ENCODE measurements at regions of chr5 and their contacts with region 1.

Region 1: DNA sequence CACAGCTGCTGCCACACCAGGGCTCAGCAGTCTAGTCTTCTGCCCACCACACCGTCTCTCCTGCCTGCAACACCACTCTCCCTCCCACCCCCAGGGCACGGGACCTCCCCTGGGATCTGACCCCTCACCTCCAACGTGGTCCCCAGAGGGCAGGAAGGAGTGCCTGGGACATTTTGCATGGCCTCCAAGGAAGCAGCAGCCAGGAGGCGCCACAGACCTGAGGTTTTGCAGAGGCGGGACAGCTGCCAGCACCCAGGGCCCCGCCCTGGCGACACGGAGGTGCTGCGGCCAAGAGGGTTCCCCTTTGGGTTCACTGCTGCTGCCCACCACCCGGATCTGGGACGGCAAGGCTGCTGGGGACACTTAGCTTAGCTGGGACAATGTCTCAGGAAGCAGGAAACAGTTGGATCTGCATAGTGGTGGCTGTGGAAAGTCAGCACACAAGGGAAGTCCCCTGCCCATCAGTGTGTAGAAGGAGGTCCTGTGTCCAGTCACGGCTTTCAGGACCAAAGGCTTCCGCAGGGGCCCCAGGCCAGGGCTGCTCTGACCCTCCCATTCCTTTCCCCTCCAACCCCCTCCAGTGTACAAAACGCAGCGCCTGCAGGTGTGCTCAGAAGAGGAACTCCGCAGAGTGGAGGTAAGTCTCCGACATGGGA is 13.8 kb downstream of the PROP1 start:
- DNase-seq: peak; percentile 65
- H3K4me3 ChIP-seq: no peak overlapping the region
- H3K27ac ChIP-seq: no peak overlapping the region
- H3K4me1 ChIP-seq: peaks cover 8% of the 10 kb centered on the region
- CTCF ChIP-seq: peak; percentile 77

Region 2: GRCh38 chr5:178063277-178063676 is 81.1 kb after region 1 on chr5:
- CTCF ChIA-PET with region 1: no interaction called
- POLR2A ChIA-PET with region 1: no interaction called
- intact Hi-C with region 1: loop called (anchors 2 kb)
- DNase-seq: no peak
- H3K4me3 ChIP-seq: no peak overlapping the region
- H3K27ac ChIP-seq: no peak overlapping the region
- H3K4me1 ChIP-seq: peaks cover 43% of the 10 kb centered on the region
- CTCF ChIP-seq: no peak

Region 3: DNA sequence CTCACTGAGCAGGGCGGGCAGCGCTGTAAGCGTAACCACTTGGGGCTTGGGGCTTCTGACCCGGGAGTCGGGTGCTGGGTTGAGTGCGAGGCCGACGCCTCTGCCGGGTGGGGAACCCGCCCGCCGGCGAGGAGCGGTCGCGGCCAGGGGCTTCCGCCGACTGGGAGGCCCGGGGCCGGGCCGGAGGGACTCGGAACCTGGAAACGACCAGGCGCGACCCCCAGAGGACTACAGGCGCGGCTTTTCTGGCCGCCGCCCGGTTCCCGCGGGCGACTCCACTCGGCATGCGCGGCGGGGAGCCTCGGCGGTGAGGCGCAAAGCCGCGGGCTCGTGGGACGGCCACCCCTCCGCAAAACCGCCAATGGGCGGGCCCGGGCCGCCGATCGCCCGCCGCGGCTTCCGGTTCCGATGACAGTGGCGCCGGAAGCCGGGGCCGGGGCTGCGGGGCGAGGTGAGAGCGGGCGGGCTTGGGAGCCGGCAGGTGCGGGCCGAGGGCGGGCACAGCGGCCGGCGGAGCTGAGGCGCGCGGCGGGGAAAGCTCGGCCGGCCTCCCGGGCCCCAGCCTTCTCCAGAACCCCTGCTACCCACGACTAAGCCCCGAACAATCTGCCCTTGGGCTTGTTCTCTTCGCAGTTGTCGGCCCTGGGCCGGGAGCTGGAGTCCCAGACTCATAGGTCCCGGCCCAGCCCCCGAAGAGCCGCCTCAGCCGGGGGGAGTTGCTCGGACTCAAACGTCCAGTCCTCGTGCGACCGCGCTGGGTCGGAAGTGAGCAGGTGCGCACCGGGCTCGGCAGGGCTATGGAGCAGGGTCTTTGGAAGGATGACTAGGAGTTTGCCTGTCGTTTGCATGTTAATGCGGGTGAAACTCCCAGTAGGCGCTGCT is 148.6 kb after region 1 on chr5 and contains the start of gene RMND5B:
- CTCF ChIA-PET with region 1: no interaction called
- POLR2A ChIA-PET with region 1: no interaction called
- intact Hi-C with region 1: no loop called
- DNase-seq: peak; percentile 92
- H3K4me3 ChIP-seq: peak within 1 kb of the TSS; percentile 97
- H3K27ac ChIP-seq: peak within 1 kb of the TSS; percentile 82
- H3K4me1 ChIP-seq: peaks cover 19% of the 10 kb centered on the region
- CTCF ChIP-seq: no peak
- total RNA-seq, gene RMND5B: 54.2 and 68.3 TPM in 2 replicates

Region 4: DNA sequence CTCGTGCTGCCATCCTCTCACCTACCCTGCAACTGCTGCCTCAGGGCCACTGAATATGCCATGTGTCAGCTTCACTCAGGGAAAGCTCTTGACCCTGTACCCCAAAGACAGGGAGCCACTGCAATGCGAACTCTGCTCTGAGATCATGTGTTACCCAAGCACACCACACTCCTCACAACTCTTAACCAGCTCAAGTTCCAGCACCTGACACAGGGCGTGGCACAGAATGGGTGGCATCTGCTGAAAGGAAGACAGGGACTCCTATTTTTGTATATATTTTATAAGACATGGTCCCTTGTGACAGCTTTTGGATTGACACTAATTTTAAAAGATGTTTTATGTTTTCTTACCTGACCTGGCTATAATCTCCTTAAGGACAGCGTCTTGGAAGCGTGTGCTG is 239.7 kb after region 1 on chr5:
- CTCF ChIA-PET with region 1: interaction called, 11 read pairs
- POLR2A ChIA-PET with region 1: no interaction called
- intact Hi-C with region 1: no loop called
- DNase-seq: no peak
- H3K4me3 ChIP-seq: no peak overlapping the region
- H3K27ac ChIP-seq: no peak overlapping the region
- H3K4me1 ChIP-seq: no peaks in the 10 kb centered on the region
- CTCF ChIP-seq: no peak

Measured in OCI-LY7 (cell line).